Naive thymus-derived CD4-positive, alpha-beta T cell (primary cell): ENCODE measurements at regions of chr3 and their contacts with region 1.

Region 1: GRCh38 chr3:187714404-187714979 is 12.1 kb upstream of the RTP2 start:
- DNase-seq: peak; percentile 37 to 73 (median 67)
- ATAC-seq: peak; percentile 92
- H3K4me3 ChIP-seq: no peak overlapping the region
- H3K4me3 Mint-ChIP-seq: no peak overlapping the region
- H3K27ac ChIP-seq: no peak overlapping the region
- H3K27ac Mint-ChIP-seq: peak overlapping the region in 1 of 9 donors; percentile 53
- H3K4me1 ChIP-seq: peaks cover 5 to 7% of the 10 kb centered on the region in 2 donors
- H3K4me1 Mint-ChIP-seq: peaks cover 8 to 17% (median 13%) of the 10 kb centered on the region in 7 donors
- H3K27me3 ChIP-seq: no peaks in the 10 kb centered on the region
- H3K27me3 Mint-ChIP-seq: peaks cover 0 to 8% (median 0%) of the 10 kb centered on the region in 5 donors

Region 2: DNA sequence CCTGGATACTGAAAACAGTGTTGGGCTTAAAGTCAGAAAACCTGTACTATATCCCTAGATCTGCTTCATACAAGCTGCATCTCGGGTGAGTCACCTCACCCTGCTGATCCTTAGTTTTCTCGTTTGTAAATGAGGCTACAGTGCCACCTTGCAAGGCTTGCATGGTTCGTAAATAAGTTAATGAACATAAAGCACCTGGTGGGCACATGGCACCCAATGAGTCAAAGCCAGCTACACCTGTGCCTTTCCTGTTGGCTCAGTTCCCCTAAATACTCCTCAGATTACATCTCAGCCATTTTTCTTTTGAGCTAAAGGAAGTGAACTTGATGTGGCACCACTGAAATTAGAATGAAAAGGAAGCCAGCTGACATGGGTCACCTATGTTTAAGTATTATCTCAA is 490.7 kb before region 1 on chr3:
- CTCF ChIA-PET with region 1: no interaction called
- POLR2A ChIA-PET with region 1: no interaction called
- intact Hi-C with region 1: loop called (anchors 1 kb)
- DNase-seq: no peak
- ATAC-seq: no peak
- H3K4me3 ChIP-seq: no peak overlapping the region
- H3K4me3 Mint-ChIP-seq: no peak overlapping the region
- H3K27ac ChIP-seq: no peak overlapping the region
- H3K27ac Mint-ChIP-seq: peak overlapping the region in 1 of 9 donors; percentile 58
- H3K4me1 ChIP-seq: no peaks in the 10 kb centered on the region
- H3K4me1 Mint-ChIP-seq: peaks cover 0 to 3% (median 0%) of the 10 kb centered on the region in 7 donors
- H3K27me3 ChIP-seq: no peaks in the 10 kb centered on the region
- H3K27me3 Mint-ChIP-seq: peaks cover 0 to 16% (median 7%) of the 10 kb centered on the region in 5 donors

Region 3: DNA sequence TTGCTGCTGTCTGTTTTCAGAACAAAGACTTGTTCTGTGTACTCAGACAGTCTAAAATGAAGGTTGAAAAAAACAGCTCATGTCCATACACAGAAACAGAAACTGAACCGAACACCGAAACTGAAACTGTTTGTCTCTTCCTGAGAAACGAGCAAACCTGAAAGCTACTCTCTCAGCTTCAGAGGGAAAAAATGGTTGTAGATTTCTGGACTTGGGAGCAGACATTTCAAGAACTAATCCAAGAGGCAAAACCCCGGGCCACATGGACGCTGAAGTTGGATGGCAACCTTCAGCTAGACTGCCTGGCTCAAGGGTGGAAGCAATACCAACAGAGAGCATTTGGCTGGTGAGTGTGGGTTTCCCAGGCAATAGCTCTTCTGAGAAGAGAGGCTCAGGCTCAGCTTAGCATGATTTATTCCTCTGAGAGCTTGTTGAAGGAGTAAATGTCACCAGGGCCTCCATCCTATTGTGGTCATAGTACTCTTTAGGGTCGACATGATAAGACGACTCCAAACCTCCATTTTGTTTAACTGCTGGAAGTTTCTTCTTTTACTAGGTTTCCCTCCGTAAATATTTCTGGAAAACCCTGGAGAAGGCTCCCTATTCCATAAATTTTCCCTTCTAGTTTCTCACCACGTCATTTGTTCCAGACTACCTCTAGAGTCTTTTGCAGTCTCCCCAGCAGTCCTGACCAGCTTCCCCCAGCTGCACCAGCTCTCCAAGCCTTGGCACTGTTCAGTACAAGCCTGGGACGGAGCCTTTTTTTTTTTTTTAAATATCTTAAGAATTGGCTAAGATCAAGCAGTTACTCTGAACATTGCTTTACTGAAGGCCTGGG is 346.0 kb before region 1 on chr3 and contains the start of gene RTP4:
- CTCF ChIA-PET with region 1: interaction called, 3 read pairs
- POLR2A ChIA-PET with region 1: no interaction called
- intact Hi-C with region 1: loop called in 1 of 2 experiments (anchors 1 kb)
- DNase-seq: peak in 8 of 9 donors; percentile 25 to 70 (median 55)
- ATAC-seq: peak; percentile 86
- H3K4me3 ChIP-seq: peak within 1 kb of the TSS; percentile 85
- H3K4me3 Mint-ChIP-seq: peak within 1 kb of the TSS; percentile 89 to 100 (median 98)
- H3K27ac ChIP-seq: peak within 1 kb of the TSS; percentile 78
- H3K27ac Mint-ChIP-seq: peak within 1 kb of the TSS; percentile 94 to 100 (median 98)
- H3K4me1 ChIP-seq: peaks cover 9 to 13% of the 10 kb centered on the region in 2 donors
- H3K4me1 Mint-ChIP-seq: peaks cover 22 to 42% (median 29%) of the 10 kb centered on the region in 7 donors
- H3K27me3 ChIP-seq: no peaks in the 10 kb centered on the region
- H3K27me3 Mint-ChIP-seq: no peaks in the 10 kb centered on the region
- total RNA-seq, gene RTP4: 1.6 to 23.1 (median 5.5) TPM

Region 4: GRCh38 chr3:187484547-187485295 is 229.8 kb before region 1 on chr3:
- CTCF ChIA-PET with region 1: no interaction called
- POLR2A ChIA-PET with region 1: no interaction called
- intact Hi-C with region 1: no loop called
- DNase-seq: no peak
- ATAC-seq: no peak
- H3K4me3 ChIP-seq: no peak overlapping the region
- H3K4me3 Mint-ChIP-seq: no peak overlapping the region
- H3K27ac ChIP-seq: no peak overlapping the region
- H3K27ac Mint-ChIP-seq: no peak overlapping the region
- H3K4me1 ChIP-seq: no peaks in the 10 kb centered on the region
- H3K4me1 Mint-ChIP-seq: no peaks in the 10 kb centered on the region
- H3K27me3 ChIP-seq: no peaks in the 10 kb centered on the region
- H3K27me3 Mint-ChIP-seq: peaks cover 22 to 45% (median 32%) of the 10 kb centered on the region in 5 donors

Region 5: GRCh38 chr3:187616307-187616972 is 98.1 kb before region 1 on chr3:
- CTCF ChIA-PET with region 1: interaction called, 4 read pairs
- POLR2A ChIA-PET with region 1: no interaction called
- intact Hi-C with region 1: loop called in 1 of 2 experiments (anchors 1 kb)
- DNase-seq: peak in 8 of 9 donors; percentile 3 to 44 (median 33)
- ATAC-seq: peak; percentile 79
- H3K4me3 ChIP-seq: no peak overlapping the region
- H3K4me3 Mint-ChIP-seq: no peak overlapping the region
- H3K27ac ChIP-seq: no peak overlapping the region
- H3K27ac Mint-ChIP-seq: no peak overlapping the region
- H3K4me1 ChIP-seq: no peaks in the 10 kb centered on the region
- H3K4me1 Mint-ChIP-seq: peaks cover 0 to 5% (median 0%) of the 10 kb centered on the region in 7 donors
- H3K27me3 ChIP-seq: no peaks in the 10 kb centered on the region
- H3K27me3 Mint-ChIP-seq: peaks cover 0 to 26% (median 18%) of the 10 kb centered on the region in 5 donors